PC-9 (cell line): ENCODE measurements at regions of chr1 and their contacts with region 1.

Region 1: DNA sequence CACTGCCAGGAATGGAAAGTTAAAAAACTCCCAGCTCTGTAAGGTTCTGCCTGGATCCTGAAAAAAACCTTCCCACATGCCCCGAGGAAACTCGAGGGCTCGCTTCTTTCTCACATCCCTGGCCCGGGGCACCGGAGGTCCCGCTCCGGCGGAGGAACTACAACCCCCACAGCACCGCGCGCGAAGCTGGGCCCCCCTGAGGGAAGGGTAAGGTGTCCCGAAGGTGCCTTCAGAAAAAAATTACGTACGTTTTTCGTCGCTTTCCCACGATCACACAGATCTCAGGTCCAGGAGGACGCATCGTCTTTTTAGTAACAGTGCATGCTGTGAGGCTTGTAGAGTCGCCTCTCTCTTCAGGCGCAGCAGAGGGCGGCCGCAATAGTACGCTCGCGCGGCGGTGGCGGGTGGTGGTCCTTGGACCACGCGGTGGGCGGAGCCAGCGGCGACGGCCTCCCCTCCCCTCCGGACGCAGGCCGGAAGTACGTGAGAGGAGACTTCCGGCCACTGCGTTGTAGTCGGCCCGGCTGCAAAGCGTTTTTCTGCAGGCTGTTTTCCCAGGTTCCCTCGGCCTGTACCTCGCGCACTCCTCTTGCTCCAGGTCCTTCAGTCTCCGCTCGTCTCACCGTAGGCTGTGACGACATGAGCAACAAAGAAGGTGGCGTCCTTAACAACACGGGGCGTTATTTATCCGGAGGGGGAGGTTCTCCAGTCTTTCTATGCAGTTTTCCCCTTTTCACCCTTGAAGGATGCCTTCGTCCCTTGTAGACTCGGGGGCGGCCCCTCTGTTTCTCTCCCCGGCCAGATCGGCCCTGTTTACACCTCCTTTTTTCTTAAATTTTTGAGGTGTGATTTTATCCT is at the start of gene TSNAX:
- DNase-seq: peak; percentile 75 to 91
- H3K4me3 ChIP-seq: peak within 1 kb of the TSS; percentile 91
- H3K27ac ChIP-seq: peak within 1 kb of the TSS; percentile 83
- H3K4me1 ChIP-seq: peaks cover 20% of the 10 kb centered on the region
- H3K27me3 ChIP-seq: no peaks in the 10 kb centered on the region
- CTCF ChIP-seq: no peak
- total RNA-seq, gene TSNAX: 23.5 and 32.1 TPM in 2 replicates

Region 2: GRCh38 chr1:231214918-231215680 is 313.3 kb before region 1 on chr1:
- CTCF ChIA-PET with region 1: no interaction called
- POLR2A ChIA-PET with region 1: no interaction called
- intact Hi-C with region 1: no loop called
- DNase-seq: no peak
- H3K4me3 ChIP-seq: no peak overlapping the region
- H3K27ac ChIP-seq: no peak overlapping the region
- H3K4me1 ChIP-seq: no peaks in the 10 kb centered on the region
- H3K27me3 ChIP-seq: peaks cover 17% of the 10 kb centered on the region
- CTCF ChIP-seq: no peak

Region 3: DNA sequence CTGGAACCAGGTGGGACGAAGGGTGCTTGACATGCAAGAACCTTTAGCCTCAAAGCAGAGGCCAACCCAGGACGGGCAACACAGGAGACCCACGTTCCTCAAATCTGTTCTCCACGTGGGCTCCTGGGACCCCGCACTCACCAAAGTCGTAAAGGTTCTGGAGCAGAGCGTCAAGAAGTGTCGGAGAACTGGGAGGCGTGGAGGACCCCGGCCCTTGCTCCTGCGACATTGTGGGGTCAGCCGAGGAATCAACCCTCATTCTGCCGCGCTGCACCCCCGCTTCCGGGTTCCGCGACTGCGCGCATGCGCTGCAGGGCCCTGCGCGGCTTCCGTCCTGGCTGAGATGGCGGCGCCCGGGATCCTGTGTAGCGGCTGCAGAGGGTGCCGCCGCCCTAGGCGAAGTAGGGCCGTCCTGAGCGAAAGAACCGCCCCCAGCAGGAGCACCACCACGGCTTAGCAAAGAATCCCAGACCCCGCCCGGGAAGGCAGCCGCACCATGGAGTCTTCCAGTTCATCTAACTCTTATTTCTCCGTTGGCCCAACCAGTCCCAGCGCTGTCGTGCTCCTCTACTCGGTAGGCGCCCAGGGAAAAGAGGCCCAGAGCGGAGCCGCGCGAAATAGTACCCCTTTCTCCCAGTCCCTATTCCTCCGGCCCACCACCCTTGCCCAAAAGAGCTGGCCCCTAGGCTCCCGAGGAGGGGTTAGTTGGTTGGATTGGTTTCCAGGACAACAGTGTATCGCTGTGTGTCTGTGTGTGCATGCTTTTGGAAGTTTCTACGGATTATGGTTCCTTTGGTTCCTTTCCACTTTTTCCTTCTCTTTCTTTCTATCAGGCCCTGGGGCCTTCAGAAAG is 287.3 kb before region 1 on chr1 and contains the start of gene GNPAT:
- CTCF ChIA-PET with region 1: no interaction called
- POLR2A ChIA-PET with region 1: no interaction called
- intact Hi-C with region 1: loop called (anchors 5 kb)
- DNase-seq: peak; percentile 75 to 89
- H3K4me3 ChIP-seq: peak within 1 kb of the TSS; percentile 98
- H3K27ac ChIP-seq: peak within 1 kb of the TSS; percentile 46; the same call in 1 of the 2 replicates
- H3K4me1 ChIP-seq: peaks cover 19% of the 10 kb centered on the region
- H3K27me3 ChIP-seq: no peaks in the 10 kb centered on the region
- CTCF ChIP-seq: no peak
- total RNA-seq, gene GNPAT: 21.8 and 22.3 TPM in 2 replicates

Region 4: DNA sequence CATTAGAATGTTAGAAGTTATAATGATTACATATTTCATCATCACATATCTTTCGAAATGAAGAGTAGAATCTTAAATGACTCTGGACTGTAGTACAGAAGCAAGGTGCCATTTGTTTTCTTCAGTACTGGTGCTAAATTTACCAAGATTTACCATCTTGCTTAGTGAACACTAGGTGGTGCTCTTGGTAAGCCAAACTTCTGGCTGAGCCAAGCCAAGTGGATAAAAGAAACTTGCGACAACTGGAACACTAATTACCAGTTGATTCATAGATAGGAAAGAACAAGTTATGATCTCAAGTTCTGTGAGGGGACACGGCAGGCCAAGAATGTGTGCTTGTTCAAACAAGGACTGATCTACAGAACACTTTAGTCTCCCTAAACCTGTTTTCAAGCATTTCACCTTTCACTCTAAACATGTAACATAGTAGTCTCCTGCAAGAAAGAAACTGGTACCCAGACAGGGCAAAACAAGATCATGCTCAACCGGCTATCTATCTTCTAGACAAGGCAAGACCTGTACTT is 170.5 kb before region 1 on chr1:
- CTCF ChIA-PET with region 1: no interaction called
- POLR2A ChIA-PET with region 1: no interaction called
- intact Hi-C with region 1: loop called (anchors 5 kb)
- DNase-seq: peak; percentile 14 to 71
- H3K4me3 ChIP-seq: no peak overlapping the region
- H3K27ac ChIP-seq: no peak overlapping the region
- H3K4me1 ChIP-seq: no peaks in the 10 kb centered on the region
- H3K27me3 ChIP-seq: no peaks in the 10 kb centered on the region
- CTCF ChIP-seq: peak; percentile 89

Region 5: GRCh38 chr1:231626535-231626945 is 98.1 kb after region 1 on chr1 and contains the start of gene DISC1:
- CTCF ChIA-PET with region 1: no interaction called
- POLR2A ChIA-PET with region 1: no interaction called
- intact Hi-C with region 1: loop called (anchors 1 kb)
- DNase-seq: peak; percentile 84 to 93
- H3K4me3 ChIP-seq: peak within 1 kb of the TSS; percentile 84
- H3K27ac ChIP-seq: no peak within 1 kb of the TSS
- H3K4me1 ChIP-seq: peaks cover 13% of the 10 kb centered on the region; the same call in 1 of the 2 replicates
- H3K27me3 ChIP-seq: no peaks in the 10 kb centered on the region
- CTCF ChIP-seq: no peak
- total RNA-seq, gene DISC1: 7.4 and 12.1 TPM in 2 replicates